Vagina (tissue), 2 donors: ENCODE measurements at regions of chr12 and their contacts with region 1.

Region 1: DNA sequence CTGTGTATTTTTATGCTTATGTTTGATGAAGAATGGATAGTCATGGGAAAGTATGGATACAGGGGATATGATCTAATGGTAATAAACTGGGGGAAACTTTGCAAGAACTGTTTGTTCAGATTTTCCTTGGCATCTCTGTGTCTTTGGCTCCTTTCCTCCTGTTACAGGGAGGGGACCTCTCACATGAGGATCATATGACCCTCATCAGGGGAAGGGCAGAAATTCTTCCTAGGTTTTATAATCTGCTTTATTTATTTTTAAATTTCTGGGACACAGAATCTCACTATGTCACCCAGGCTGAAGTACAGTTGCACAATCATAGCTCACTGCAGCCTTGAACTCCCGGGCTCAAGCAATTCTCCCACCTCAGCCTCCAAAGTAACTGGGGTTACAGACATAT is 526.5 kb downstream of the CCER1 start:
- DNase-seq: no peak
- H3K4me3 ChIP-seq: no peak overlapping the region
- H3K27ac ChIP-seq: peak overlapping the region; percentile 51
- H3K4me1 ChIP-seq: no peaks in the 10 kb centered on the region
- H3K27me3 ChIP-seq: no peaks in the 10 kb centered on the region
- CTCF ChIP-seq: no peak
- POLR2A ChIP-seq: no peak

Region 2: GRCh38 chr12:90399357-90399756 is 29.1 kb before region 1 on chr12:
- intact Hi-C with region 1: no loop called
- DNase-seq: no peak
- H3K4me3 ChIP-seq: no peak overlapping the region
- H3K27ac ChIP-seq: no peak overlapping the region
- H3K4me1 ChIP-seq: no peaks in the 10 kb centered on the region
- H3K27me3 ChIP-seq: no peaks in the 10 kb centered on the region
- CTCF ChIP-seq: no peak
- POLR2A ChIP-seq: no peak

Region 3: DNA sequence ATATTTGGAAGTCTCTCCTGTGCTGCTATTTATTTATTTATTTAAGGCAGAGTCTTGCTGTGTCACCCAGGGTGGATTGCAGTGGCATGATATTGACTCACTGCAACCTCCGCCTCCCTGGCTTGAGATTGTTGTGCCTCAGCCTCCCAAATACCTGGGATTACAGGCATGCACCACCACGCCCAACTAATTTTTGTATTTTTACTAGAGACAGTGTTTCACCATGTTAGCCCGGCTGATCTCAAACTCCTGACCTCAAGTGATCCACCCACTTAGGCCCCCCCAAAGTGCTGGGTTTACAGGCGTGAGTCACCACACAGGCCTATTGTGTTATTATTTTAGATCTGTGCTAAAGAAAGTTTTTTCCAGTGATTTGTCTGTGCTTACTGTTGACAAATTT is 301.3 kb after region 1 on chr12:
- intact Hi-C with region 1: loop called (anchors 10 kb)
- DNase-seq: no peak
- H3K4me3 ChIP-seq: no peak overlapping the region
- H3K27ac ChIP-seq: no peak overlapping the region
- H3K4me1 ChIP-seq: no peaks in the 10 kb centered on the region
- H3K27me3 ChIP-seq: no peaks in the 10 kb centered on the region
- CTCF ChIP-seq: no peak
- POLR2A ChIP-seq: no peak